T-cell (primary cell): ENCODE measurements at regions of chr6 and their contacts with region 1.

Region 1: GRCh38 chr6:119125576-119125975 is 47.1 kb upstream of the FAM184A start:
- DNase-seq: no peak
- ATAC-seq: no peak
- H3K4me3 ChIP-seq: no peak overlapping the region
- H3K4me3 Mint-ChIP-seq: no peak overlapping the region
- H3K27ac ChIP-seq: no peak overlapping the region
- H3K27ac Mint-ChIP-seq: no peak overlapping the region
- H3K4me1 ChIP-seq: no peaks in the 10 kb centered on the region
- H3K4me1 Mint-ChIP-seq: peaks cover 0 to 5% (median 5%) of the 10 kb centered on the region in 3 donors
- H3K27me3 ChIP-seq: no peaks in the 10 kb centered on the region
- H3K27me3 Mint-ChIP-seq: peaks cover 0 to 1% of the 10 kb centered on the region in 2 donors

Region 2: GRCh38 chr6:119090256-119090655 is 35.3 kb before region 1 on chr6:
- CTCF ChIA-PET with region 1: no interaction called
- POLR2A ChIA-PET with region 1: no interaction called
- DNase-seq: no peak
- ATAC-seq: no peak
- H3K4me3 ChIP-seq: no peak overlapping the region
- H3K4me3 Mint-ChIP-seq: no peak overlapping the region
- H3K27ac ChIP-seq: no peak overlapping the region
- H3K27ac Mint-ChIP-seq: no peak overlapping the region
- H3K4me1 ChIP-seq: no peaks in the 10 kb centered on the region
- H3K4me1 Mint-ChIP-seq: peaks cover 0 to 10% (median 4%) of the 10 kb centered on the region in 3 donors
- H3K27me3 ChIP-seq: no peaks in the 10 kb centered on the region
- H3K27me3 Mint-ChIP-seq: peaks cover 0 to 3% of the 10 kb centered on the region in 2 donors

Region 3: DNA sequence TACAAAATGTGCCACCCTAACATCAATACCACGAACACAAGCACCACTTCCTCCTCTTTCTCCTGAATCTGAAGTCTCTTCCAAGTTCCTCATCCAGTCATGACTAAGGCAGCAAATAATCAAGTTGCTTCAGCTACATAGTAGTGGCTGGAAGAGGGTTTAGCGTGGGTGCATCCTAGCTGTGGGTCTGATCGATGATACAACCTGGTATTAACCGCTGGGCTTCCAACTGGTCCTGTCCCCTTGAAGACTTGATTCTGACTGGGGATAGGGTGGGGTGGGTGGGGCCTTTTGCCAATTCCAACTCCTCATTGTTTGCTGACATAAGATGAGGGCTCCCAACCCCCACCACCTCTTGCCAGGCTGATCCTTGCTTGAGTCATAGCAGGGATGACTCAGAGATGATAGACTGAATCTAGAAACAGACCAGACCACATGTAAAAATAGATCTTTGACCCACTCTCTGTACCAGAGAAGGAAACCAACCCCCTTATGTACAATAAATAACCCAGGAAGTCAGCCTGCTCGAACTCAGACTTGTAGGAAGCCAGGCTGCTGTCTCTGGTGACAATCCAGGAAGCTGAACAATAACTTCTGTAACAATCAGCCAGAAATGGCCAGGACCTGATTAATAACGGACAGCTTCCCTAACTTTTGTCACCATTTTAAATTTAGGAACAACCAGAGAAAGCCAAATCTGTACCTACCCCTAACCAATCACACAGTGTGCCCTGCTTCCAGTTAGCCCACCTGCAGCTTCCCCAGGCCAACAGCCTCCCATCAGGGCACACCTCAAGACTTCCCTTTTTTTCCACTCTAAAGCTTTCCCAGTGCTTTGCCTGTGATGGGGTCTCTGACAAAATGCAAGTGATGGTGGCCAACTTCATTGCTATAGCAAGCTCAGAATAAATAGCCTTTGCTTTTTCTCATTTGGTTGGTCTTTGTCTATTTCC is 21.8 kb after region 1 on chr6:
- CTCF ChIA-PET with region 1: interaction called in 1 of 2 experiments, 4 read pairs
- POLR2A ChIA-PET with region 1: interaction called in 1 of 2 experiments, 18 read pairs
- DNase-seq: peak in 1 of 35 experiments; percentile 6
- ATAC-seq: peak; percentile 33 to 46 (median 38)
- H3K4me3 ChIP-seq: no peak overlapping the region
- H3K4me3 Mint-ChIP-seq: no peak overlapping the region
- H3K27ac ChIP-seq: peak overlapping the region; percentile 26
- H3K27ac Mint-ChIP-seq: peak overlapping the region; percentile 23 to 48
- H3K4me1 ChIP-seq: peaks cover 3 to 8% of the 10 kb centered on the region in 2 experiments
- H3K4me1 Mint-ChIP-seq: peaks cover 10 to 23% (median 12%) of the 10 kb centered on the region in 3 donors
- H3K27me3 ChIP-seq: no peaks in the 10 kb centered on the region
- H3K27me3 Mint-ChIP-seq: peaks cover 0 to 7% of the 10 kb centered on the region in 2 donors